Naive thymus-derived CD4-positive, alpha-beta T cell (primary cell): ENCODE measurements at regions of chr14 and their contacts with region 1.

Region 1: DNA sequence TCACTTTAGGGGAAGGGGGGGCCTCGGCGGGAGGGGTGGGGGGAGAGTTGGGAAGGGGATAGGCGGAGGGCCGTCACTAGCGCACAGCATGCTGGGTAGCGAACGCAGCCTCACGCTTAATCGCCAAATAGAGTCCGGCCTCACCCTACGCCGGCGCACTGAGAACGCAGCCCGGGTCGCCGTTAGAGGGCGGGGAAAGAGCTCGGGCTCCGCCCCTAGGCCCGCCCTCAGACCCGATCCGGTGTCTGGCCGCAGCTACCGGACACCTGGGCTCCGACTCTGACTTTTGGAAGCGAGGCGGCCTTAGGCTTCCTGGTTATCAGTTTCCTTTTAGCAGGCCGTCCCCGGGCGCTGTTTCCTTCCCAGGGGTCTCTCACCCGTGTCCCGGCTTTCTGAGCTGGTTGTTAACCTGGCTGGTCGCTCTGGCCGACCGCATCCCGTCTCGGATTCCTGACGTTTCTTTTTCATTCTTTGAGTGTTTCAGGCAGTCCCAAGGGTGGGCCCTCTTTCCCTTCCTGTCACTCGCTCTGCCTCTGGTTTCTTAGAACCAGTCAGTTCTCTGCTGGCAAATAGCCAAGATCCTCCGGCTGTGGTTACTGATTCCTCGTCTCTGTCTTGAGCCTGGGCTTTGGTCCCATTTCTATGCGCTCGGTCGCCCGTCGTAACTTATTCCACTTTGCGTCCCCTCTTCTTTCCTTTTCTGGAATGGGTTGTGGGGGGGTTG is 378 bp upstream of the STRN3 start:
- DNase-seq: peak; percentile 74 to 93 (median 80)
- ATAC-seq: peak; percentile 97
- H3K4me3 ChIP-seq: peak overlapping the region; percentile 84
- H3K4me3 Mint-ChIP-seq: peak overlapping the region; percentile 86 to 100 (median 96)
- H3K27ac ChIP-seq: peak overlapping the region; percentile 91
- H3K27ac Mint-ChIP-seq: peak overlapping the region; percentile 89 to 98 (median 96)
- H3K4me1 ChIP-seq: no peaks in the 10 kb centered on the region
- H3K4me1 Mint-ChIP-seq: peaks cover 38 to 62% (median 49%) of the 10 kb centered on the region in 7 donors
- H3K27me3 ChIP-seq: no peaks in the 10 kb centered on the region
- H3K27me3 Mint-ChIP-seq: no peaks in the 10 kb centered on the region

Region 2: DNA sequence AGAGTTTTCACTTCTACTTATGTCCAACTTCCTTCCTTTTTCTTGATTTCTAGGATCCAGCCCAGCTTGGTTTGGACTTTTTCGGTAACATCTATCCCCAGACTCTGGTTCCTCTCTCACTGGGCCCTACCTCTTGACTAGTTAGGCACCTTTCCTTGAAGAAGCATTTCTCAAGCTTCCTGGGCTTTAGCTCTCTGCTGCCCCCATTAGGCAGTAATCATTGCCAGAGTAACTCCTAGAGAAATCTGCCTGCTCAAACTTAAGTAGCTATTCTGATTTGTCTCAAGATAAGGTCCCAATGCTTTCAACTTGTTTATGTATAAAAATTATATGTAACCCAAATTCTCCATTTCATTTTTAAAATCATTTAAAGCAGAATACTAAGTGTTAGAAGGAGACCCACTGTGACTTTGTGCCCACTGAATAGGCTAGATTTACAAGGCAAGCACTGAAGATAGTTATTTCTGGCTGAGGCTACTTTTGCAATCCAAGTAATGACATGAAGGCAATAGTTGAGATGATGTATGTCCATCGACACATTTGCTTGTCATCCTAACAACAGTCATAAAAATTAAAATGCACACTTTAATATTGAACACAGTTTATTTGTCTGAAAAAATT is 742.6 kb before region 1 on chr14:
- CTCF ChIA-PET with region 1: no interaction called
- POLR2A ChIA-PET with region 1: no interaction called
- intact Hi-C with region 1: no loop called
- DNase-seq: no peak
- ATAC-seq: no peak
- H3K4me3 ChIP-seq: no peak overlapping the region
- H3K4me3 Mint-ChIP-seq: no peak overlapping the region
- H3K27ac ChIP-seq: no peak overlapping the region
- H3K27ac Mint-ChIP-seq: no peak overlapping the region
- H3K4me1 ChIP-seq: no peaks in the 10 kb centered on the region
- H3K4me1 Mint-ChIP-seq: no peaks in the 10 kb centered on the region
- H3K27me3 ChIP-seq: no peaks in the 10 kb centered on the region
- H3K27me3 Mint-ChIP-seq: peaks cover 0 to 3% (median 0%) of the 10 kb centered on the region in 5 donors

Region 3: DNA sequence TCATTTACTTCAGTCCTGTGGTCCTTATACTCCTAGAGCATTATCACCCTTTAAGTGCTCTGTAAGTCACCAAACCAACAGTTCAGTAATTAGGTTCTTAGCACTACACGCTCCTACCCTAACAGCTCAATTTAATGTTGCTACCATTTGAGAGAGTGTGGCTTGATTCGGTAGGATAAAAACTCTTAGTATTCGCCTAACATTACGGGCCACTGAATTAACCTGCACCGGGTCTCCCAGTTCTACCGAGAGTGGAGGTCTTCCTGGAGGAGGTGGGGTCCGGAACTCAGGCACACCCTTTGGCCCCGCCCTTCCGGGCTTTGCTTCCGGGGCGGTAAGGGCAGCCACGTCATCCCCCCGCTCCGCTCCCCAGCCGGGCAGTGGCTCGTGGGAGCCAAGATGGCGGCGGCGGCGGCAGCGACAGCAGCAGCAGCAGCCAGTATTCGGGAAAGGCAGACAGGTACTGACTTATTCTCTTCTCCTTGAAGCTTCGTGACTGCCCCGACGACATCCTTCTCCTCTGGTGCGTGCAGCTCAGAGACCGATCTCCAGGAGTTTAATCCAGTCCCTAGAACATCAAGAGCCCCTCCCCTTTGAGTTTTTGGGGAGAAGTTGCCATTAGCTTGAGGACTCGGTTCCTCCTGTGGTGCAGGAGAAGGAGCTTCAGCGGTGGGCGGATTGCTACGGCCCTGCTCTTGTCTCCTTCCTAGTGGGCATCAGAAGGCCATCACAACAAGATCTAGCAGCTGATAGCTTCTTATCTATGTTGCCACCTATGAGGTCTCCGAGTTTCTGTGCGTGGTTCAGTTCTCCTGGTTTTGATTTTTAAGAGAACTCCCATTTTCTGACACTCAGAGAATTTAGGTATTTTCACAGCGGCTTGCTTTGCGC is 404.4 kb before region 1 on chr14 and contains the start of gene SCFD1:
- CTCF ChIA-PET with region 1: no interaction called
- POLR2A ChIA-PET with region 1: interaction called, 6 read pairs
- intact Hi-C with region 1: loop called (anchors 2 to 5 kb)
- DNase-seq: peak; percentile 86 to 94 (median 91)
- ATAC-seq: peak; percentile 99
- H3K4me3 ChIP-seq: peak within 1 kb of the TSS; percentile 97
- H3K4me3 Mint-ChIP-seq: peak within 1 kb of the TSS; percentile 95 to 100 (median 97)
- H3K27ac ChIP-seq: peak within 1 kb of the TSS; percentile 86
- H3K27ac Mint-ChIP-seq: peak within 1 kb of the TSS; percentile 86 to 98 (median 95)
- H3K4me1 ChIP-seq: peaks cover 14 to 26% of the 10 kb centered on the region in 2 donors
- H3K4me1 Mint-ChIP-seq: peaks cover 14 to 58% (median 44%) of the 10 kb centered on the region in 7 donors
- H3K27me3 ChIP-seq: no peaks in the 10 kb centered on the region
- H3K27me3 Mint-ChIP-seq: no peaks in the 10 kb centered on the region
- total RNA-seq, gene SCFD1: 63.2 to 75.4 (median 68.2) TPM

Region 4: DNA sequence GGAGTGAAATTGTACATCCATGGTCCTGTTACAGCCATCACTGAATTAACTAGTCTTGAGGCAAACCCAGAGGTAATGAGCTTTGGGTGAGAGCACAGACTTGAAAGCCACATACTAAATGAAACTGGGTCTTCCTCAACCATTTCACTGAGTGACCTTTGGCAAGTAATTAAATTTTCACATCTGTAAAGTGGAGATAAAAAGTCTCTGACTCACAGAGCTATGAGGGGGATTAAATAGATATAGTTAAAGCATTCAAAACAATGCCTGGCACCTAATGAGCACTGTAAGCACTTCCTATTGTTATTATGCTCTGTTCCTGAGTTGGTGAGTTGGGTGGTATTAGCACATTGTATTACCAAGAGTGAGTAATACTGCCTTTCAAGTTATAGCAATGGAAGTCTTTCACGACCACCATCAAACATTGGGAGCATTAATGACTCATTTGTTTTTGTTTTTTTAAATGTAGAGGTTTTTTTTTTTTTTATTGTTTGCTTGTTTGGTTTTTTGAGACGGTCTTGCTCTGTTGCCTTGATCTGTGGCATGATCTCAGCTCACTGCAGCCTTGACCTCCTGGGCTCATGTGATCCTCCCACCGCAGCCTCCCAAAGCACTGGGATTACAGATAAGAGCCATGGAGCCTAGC is 12.1 kb after region 1 on chr14:
- CTCF ChIA-PET with region 1: no interaction called
- POLR2A ChIA-PET with region 1: interaction called, 10 read pairs
- intact Hi-C with region 1: no loop called
- DNase-seq: no peak
- ATAC-seq: no peak
- H3K4me3 ChIP-seq: no peak overlapping the region
- H3K4me3 Mint-ChIP-seq: no peak overlapping the region
- H3K27ac ChIP-seq: no peak overlapping the region
- H3K27ac Mint-ChIP-seq: no peak overlapping the region
- H3K4me1 ChIP-seq: no peaks in the 10 kb centered on the region
- H3K4me1 Mint-ChIP-seq: peaks cover 0 to 6% (median 0%) of the 10 kb centered on the region in 7 donors
- H3K27me3 ChIP-seq: no peaks in the 10 kb centered on the region
- H3K27me3 Mint-ChIP-seq: no peaks in the 10 kb centered on the region

Region 5: DNA sequence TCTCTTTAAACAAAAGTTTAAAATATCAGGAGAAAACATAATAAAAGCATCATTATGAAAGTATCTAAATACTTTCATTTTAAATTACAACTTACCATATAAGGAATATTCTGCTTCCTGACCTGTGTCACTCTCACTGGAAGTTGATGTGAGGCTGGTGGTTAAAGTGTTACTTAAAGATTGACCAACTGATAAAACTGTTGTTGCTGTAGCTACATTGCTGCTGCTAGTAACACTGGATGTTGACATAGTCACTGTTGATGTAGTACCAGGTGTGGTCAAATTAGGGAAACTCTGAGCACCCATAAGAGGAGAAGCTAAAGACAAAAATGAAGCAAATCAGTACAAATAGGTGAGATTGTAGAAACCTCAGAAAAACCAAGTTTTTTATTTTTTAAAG is 101.1 kb after region 1 on chr14:
- CTCF ChIA-PET with region 1: no interaction called
- POLR2A ChIA-PET with region 1: interaction called, 5 read pairs
- intact Hi-C with region 1: loop called (anchors 1 to 2 kb)
- DNase-seq: peak in 5 of 9 donors; percentile 2 to 42 (median 27)
- ATAC-seq: peak; percentile 91
- H3K4me3 ChIP-seq: no peak overlapping the region
- H3K4me3 Mint-ChIP-seq: peak overlapping the region in 3 of 10 donors; percentile 7 to 67 (median 18)
- H3K27ac ChIP-seq: no peak overlapping the region
- H3K27ac Mint-ChIP-seq: peak overlapping the region in 5 of 9 donors; percentile 11 to 75 (median 52)
- H3K4me1 ChIP-seq: peaks cover 9 to 30% of the 10 kb centered on the region in 2 donors
- H3K4me1 Mint-ChIP-seq: peaks cover 16 to 47% (median 39%) of the 10 kb centered on the region in 7 donors
- H3K27me3 ChIP-seq: no peaks in the 10 kb centered on the region
- H3K27me3 Mint-ChIP-seq: peaks cover 0 to 2% (median 0%) of the 10 kb centered on the region in 5 donors

Region 6: DNA sequence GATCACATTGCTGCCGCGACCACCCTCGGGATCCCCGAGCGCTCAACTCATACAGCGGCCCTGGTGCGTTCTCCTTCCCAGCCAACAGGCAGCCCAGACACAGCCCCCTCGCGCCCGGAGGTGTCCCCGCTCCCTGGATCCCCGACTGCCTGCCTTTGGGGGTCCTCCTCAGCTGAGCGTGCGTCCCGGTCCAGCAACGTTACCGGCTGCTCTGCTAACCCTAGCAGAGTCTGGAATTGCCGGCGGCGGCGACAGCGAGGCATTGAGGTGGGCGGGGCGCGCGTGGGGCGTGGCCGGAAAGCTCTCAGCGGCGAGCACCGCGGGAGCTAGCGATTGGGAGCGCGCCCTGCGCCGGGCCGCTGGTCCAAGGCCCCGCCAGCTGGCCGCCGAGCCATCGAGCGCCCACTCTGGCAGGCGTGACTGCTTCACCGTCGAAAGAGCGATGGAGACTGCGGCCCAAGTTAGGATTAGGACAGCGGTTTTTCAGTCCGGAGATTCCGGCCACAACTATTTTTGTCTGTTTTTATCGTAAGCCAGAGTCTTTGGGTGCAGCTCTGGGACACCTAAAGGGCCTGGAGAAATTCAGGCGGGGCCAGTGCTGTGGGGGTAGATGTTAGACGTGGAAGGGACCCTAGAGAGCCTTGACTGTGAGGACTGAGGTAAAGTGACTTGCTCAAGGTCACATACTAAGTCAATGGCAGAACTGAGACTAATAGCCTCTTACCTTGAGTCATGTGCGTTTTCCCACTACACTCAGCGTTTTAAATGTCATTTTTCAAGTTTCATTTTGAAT is 394.0 kb after region 1 on chr14 and contains the start of gene HEATR5A:
- CTCF ChIA-PET with region 1: no interaction called
- POLR2A ChIA-PET with region 1: interaction called, 4 read pairs
- intact Hi-C with region 1: loop called (anchors 1 kb)
- DNase-seq: peak; percentile 84 to 93 (median 90)
- ATAC-seq: peak; percentile 99
- H3K4me3 ChIP-seq: peak within 1 kb of the TSS; percentile 99
- H3K4me3 Mint-ChIP-seq: peak within 1 kb of the TSS; percentile 94 to 99 (median 98)
- H3K27ac ChIP-seq: peak within 1 kb of the TSS; percentile 83
- H3K27ac Mint-ChIP-seq: peak within 1 kb of the TSS; percentile 82 to 97 (median 92)
- H3K4me1 ChIP-seq: peaks cover 6 to 8% of the 10 kb centered on the region in 2 donors
- H3K4me1 Mint-ChIP-seq: peaks cover 20 to 35% (median 25%) of the 10 kb centered on the region in 7 donors
- H3K27me3 ChIP-seq: no peaks in the 10 kb centered on the region
- H3K27me3 Mint-ChIP-seq: peaks cover 0 to 7% (median 0%) of the 10 kb centered on the region in 5 donors
- total RNA-seq, gene HEATR5A: 7.7 to 14.4 (median 13.2) TPM

Region 7: DNA sequence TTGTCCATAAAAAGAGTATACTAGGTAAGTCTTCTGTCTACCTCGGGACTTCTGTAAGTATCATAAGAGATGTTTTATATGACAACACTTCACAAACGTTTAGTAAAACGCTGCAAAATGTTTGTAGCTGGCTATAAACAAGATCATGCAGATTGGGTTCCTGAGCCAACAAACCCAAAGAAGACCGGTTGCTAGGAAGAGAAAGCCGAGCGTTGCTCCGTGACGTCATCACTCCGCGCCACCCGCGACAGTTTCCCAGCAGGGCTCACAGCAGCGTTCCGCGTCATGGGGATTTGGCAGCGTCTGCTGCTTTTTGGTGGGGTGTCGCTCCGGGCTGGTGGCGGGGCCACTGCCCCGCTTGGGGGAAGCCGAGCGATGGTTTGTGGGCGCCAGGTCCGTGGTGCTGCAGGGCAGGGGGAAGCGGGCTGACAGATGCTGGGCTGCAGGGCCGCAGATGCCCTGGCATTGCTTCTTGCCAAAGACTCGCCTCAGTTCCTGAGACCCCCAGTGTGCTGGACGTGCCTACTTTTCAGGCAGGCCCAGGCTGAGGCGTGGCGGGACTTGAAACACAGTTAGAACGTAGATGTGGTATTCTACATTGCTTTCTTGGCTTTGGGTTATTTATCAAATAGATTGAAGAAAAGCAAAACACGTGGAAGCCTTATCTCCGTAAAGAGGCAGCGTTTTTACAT is 534.7 kb after region 1 on chr14 and contains the start of gene NUBPL:
- CTCF ChIA-PET with region 1: no interaction called
- POLR2A ChIA-PET with region 1: no interaction called
- intact Hi-C with region 1: loop called (anchors 1 kb)
- DNase-seq: peak; percentile 96 to 98 (median 97)
- ATAC-seq: peak; percentile 95
- H3K4me3 ChIP-seq: peak within 1 kb of the TSS; percentile 90
- H3K4me3 Mint-ChIP-seq: peak within 1 kb of the TSS; percentile 88 to 98 (median 96)
- H3K27ac ChIP-seq: peak within 1 kb of the TSS; percentile 81
- H3K27ac Mint-ChIP-seq: peak within 1 kb of the TSS; percentile 95 to 100 (median 99)
- H3K4me1 ChIP-seq: peaks cover 0 to 5% of the 10 kb centered on the region in 2 donors
- H3K4me1 Mint-ChIP-seq: peaks cover 24 to 44% (median 38%) of the 10 kb centered on the region in 7 donors
- H3K27me3 ChIP-seq: no peaks in the 10 kb centered on the region
- H3K27me3 Mint-ChIP-seq: peaks cover 0 to 11% (median 5%) of the 10 kb centered on the region in 5 donors
- total RNA-seq, gene NUBPL: 6.1 to 11.7 (median 8.3) TPM